Activated B cell treated with CpG ODN at 0.5 μM for 24 hours (primary cell): ENCODE measurements at regions of chr20 and their contacts with region 1.

Region 1: DNA sequence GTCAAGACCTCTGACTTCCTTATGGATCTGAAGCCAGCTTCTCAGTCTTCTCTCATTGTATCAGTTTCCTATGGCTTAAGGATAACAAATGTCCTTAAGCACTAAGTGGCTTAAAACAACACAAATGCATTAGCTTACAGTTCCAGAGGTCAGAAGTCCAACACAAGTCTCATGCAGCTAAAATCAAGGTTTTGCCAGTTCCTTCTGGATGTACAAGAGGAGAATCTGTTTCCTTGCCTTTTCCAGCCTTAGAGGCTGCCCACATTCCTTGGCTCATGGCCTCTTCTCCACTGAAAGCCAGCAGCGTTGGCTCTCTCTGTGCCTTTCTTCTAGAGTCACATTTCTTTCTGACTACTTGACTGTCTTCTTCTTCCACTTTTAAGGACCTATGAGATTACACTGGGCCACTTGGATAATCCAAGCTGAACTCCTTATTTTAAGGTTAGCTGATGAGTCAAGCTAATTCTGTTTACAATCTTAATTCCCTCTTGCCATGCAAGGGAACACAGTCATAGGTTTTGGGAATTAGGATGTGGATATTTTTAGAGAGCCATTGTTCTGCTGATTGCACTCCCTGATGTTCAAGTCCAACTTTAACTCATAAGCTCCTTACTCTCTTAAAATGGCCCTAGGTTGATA is 179.0 kb downstream of the BCAS1 start:
- DNase-seq: no peak
- ATAC-seq: no peak
- H3K4me3 Mint-ChIP-seq: no peak overlapping the region
- H3K27ac Mint-ChIP-seq: peak overlapping the region; percentile 9
- H3K4me1 Mint-ChIP-seq: peaks cover 38% of the 10 kb centered on the region
- H3K27me3 Mint-ChIP-seq: no peaks in the 10 kb centered on the region
- CTCF ChIP-seq: no peak

Region 2: GRCh38 chr20:53934421-53935343 is 43.3 kb after region 1 on chr20:
- CTCF ChIA-PET with region 1: interaction called, 3 read pairs
- POLR2A ChIA-PET with region 1: interaction called, 6 read pairs
- intact Hi-C with region 1: loop called (anchors 2 kb)
- DNase-seq: no peak
- ATAC-seq: peak; percentile 41
- H3K4me3 Mint-ChIP-seq: peak overlapping the region; percentile 60
- H3K27ac Mint-ChIP-seq: peak overlapping the region; percentile 90
- H3K4me1 Mint-ChIP-seq: peaks cover 89% of the 10 kb centered on the region
- H3K27me3 Mint-ChIP-seq: no peaks in the 10 kb centered on the region
- CTCF ChIP-seq: no peak